PC-3 (cell line): ENCODE measurements at regions of chr12 and their contacts with region 1.

Region 1: DNA sequence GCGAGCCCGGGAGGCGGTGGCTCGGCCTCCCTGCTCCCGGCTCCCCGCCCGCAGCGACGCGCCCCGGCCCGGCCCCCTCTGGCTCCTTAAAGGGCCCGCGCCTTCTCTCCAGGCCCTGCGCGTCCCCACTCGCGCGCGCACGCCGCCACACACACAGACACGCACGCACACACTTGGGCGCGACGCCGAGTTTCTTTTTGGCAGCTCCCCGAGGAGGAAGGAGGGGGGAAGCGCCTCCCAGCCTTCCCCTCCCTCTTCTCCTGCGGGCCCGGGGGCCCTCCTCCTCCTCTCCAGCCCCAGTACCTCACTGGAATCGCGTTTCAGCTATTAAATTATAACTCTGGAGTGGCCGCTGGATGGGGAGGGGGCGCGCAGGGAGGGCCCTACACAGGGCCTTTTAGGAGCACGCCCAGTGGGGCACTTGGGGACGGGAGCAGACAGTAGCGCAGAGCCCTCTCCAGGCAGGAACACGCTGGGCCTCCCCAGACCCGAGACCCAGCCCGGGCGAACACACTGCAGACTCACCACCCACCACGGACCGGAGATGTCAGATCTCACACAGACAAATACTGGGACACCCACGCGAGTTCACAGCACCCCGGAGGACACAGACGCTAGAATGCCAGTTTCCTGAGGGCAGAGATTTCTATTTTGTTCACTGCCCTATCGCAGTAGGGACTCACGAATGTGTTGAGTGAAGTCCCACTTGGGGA is 405 bp upstream of the NCOR2 start:
- DNase-seq: peak; percentile 85
- ATAC-seq: peak; percentile 70
- H3K4me3 ChIP-seq: peak overlapping the region; percentile 72
- H3K27ac ChIP-seq: peak overlapping the region; percentile 2; the same call in 1 of the 2 replicates
- H3K4me1 ChIP-seq: 0 out of 2 replicates have a peak, but pooled peaks cover 8% of the 10 kb centered on the region
- H3K27me3 ChIP-seq: no peaks in the 10 kb centered on the region
- CTCF ChIP-seq: no peak

Region 2: DNA sequence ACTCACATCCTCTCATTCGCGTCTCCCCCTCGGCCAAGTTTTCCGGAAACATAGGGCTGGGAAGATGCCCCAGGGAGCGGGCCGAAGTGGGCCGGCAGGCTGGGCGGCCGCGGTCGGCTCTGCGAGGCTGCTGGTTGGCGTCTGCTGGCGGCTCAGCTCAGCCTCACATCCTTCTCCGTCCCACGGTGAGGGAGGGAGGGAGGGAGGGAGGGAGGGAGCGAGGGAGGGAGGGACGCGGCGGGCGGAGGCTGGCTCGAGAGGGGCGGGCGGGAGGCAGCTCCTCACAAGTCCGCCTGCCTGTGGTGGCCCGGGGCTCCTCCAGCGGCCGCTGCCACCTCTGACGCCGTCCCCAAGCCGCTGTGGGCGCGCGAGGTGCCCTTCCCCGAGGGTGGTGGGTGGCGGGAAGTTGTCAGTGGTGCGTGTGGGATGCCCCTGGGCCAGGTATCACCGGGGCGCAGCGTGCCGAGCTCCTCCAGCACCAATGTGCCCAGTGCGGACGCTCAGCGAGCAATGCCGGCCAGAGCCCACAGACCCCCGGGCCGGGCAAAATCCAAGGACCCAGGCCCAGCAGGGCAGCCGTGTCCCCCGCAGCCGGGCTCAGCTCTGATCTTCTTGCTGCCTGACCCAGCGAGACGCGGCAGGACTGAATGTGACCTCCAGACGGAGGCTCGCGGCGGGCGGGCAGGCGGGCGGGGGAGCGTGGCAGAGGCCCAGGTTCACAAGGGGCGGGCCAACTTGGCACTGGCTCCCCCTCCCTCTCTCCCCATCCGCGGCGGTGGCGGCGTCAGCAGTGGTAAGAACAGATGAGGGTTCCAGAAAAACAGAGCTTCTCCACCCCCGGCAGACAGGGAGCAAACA is 178.9 kb before region 1 on chr12:
- CTCF ChIA-PET with region 1: interaction called, 4 read pairs
- POLR2A ChIA-PET with region 1: no interaction called
- intact Hi-C with region 1: loop called (anchors 5 kb)
- DNase-seq: peak; percentile 79
- ATAC-seq: peak; percentile 28
- H3K4me3 ChIP-seq: peak overlapping the region; percentile 90
- H3K27ac ChIP-seq: peak overlapping the region; percentile 91
- H3K4me1 ChIP-seq: peaks cover 75% of the 10 kb centered on the region
- H3K27me3 ChIP-seq: no peaks in the 10 kb centered on the region
- CTCF ChIP-seq: no peak

Region 3: GRCh38 chr12:124609041-124609995 is 41.5 kb after region 1 on chr12:
- CTCF ChIA-PET with region 1: no interaction called
- POLR2A ChIA-PET with region 1: no interaction called
- intact Hi-C with region 1: loop called (anchors 2 kb)
- DNase-seq: peak; percentile 96
- ATAC-seq: peak; percentile 71
- H3K4me3 ChIP-seq: peak overlapping the region; percentile 55
- H3K27ac ChIP-seq: peak overlapping the region; percentile 71
- H3K4me1 ChIP-seq: peaks cover 30% of the 10 kb centered on the region
- H3K27me3 ChIP-seq: no peaks in the 10 kb centered on the region
- CTCF ChIP-seq: no peak

Region 4: DNA sequence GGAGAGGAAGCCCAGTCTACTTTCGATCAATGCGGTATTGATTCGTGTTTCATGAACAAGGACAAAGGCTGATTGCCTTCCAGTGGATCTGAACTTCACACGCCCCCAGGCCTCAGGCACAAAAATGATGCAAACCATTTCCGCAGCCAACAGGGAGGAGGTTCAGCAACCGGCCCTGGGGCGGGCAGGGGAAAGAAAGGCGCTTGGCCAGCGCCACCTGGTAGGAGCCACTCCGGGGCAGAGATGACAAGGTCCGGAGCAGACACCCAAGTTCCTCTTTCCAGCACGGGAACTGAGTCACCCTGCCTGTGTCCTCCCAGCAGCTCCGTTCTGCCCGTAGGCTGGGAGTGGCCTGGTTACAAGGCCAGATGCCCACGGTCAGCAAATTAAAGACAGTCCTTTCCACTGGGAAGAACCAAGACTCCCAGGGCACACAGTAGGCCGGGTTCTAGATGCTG is 159.5 kb after region 1 on chr12:
- CTCF ChIA-PET with region 1: no interaction called
- POLR2A ChIA-PET with region 1: no interaction called
- intact Hi-C with region 1: loop called (anchors 2 kb)
- DNase-seq: peak; percentile 95
- ATAC-seq: peak; percentile 98
- H3K4me3 ChIP-seq: peak overlapping the region; percentile 39; the same call in 1 of the 2 replicates
- H3K27ac ChIP-seq: peak overlapping the region; percentile 77
- H3K4me1 ChIP-seq: peaks cover 23% of the 10 kb centered on the region
- H3K27me3 ChIP-seq: no peaks in the 10 kb centered on the region
- CTCF ChIP-seq: peak; percentile 49; the same call in 1 of the 2 replicates

Region 5: GRCh38 chr12:124738636-124739461 is 171.0 kb after region 1 on chr12:
- CTCF ChIA-PET with region 1: no interaction called
- POLR2A ChIA-PET with region 1: no interaction called
- intact Hi-C with region 1: no loop called
- DNase-seq: no peak
- ATAC-seq: no peak
- H3K4me3 ChIP-seq: no peak overlapping the region
- H3K27ac ChIP-seq: no peak overlapping the region
- H3K4me1 ChIP-seq: peaks cover 19% of the 10 kb centered on the region
- H3K27me3 ChIP-seq: no peaks in the 10 kb centered on the region
- CTCF ChIP-seq: no peak

Region 6: DNA sequence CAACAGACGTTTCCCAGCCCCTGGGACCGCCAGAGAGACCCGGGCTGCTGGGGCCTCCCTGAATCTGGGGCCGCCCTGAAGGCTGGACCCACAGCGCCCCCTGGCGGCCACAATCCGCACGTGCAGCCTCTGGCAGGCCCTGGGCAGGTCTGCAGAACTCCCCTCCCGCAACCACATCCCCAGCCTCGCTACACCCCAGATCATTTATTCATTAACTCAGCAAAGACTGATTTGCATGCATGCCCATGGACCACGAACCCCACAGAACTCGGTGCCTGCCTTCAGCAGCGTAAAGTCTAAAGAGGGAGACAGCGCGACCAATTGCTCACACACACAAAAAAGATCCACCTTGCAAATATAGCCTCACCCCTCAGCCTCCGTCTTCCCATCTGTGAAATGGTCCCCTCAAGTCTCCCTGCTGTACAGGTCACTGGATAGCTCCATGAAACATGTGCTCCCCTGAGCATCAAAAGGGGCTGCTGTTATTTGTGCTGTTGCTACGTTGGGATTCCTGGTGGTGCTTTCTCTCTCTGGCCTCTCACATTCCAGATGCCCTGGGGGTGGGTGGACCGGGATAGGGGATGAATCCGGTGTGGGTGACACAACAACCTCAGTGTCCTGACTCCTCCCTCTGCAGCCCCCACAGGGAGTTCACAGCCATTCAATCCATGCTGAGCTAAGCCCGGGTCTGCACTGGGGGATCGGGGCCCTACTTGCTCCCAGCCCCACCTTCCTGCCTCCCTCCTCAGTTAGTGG is 199.4 kb after region 1 on chr12:
- CTCF ChIA-PET with region 1: no interaction called
- POLR2A ChIA-PET with region 1: no interaction called
- intact Hi-C with region 1: loop called (anchors 2 kb)
- DNase-seq: peak; percentile 78
- ATAC-seq: peak; percentile 78
- H3K4me3 ChIP-seq: no peak overlapping the region
- H3K27ac ChIP-seq: no peak overlapping the region
- H3K4me1 ChIP-seq: peaks cover 16% of the 10 kb centered on the region
- H3K27me3 ChIP-seq: no peaks in the 10 kb centered on the region
- CTCF ChIP-seq: peak; percentile 99